MCF 10A (cell line): ENCODE measurements at regions of chr10 and their contacts with region 1.

Region 1: DNA sequence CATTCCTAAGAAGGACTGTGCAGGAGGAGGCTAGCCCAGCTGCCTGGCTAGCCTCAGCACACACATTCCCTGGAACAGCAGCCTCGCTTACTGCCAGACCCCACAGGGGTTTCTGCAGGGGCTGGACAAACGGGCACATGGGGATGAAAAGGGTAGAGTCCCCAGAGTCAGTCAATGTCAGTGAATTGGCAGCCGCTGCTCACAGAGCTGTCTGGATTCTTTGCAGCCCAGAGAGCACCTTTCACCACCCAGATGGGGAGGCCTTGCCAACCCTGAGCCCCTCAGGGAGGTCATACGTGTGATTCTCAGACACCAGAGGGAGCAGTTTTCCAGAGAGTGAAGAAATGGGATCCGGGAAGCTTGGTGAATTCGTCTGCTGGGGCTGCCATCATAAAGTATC is 143.3 kb downstream of the KCNMA1 start:
- DNase-seq: peak; percentile 49
- H3K4me3 Mint-ChIP-seq: no peak overlapping the region
- H3K27ac Mint-ChIP-seq: no peak overlapping the region
- H3K4me1 Mint-ChIP-seq: peaks cover 11% of the 10 kb centered on the region
- H3K27me3 Mint-ChIP-seq: no peaks in the 10 kb centered on the region
- CTCF ChIP-seq: no peak

Region 2: GRCh38 chr10:77605466-77605865 is 111.1 kb after region 1 on chr10:
- CTCF ChIA-PET with region 1: no interaction called
- POLR2A ChIA-PET with region 1: no interaction called
- intact Hi-C with region 1: loop called (anchors 1 kb)
- DNase-seq: peak; percentile 35
- H3K4me3 Mint-ChIP-seq: no peak overlapping the region
- H3K27ac Mint-ChIP-seq: no peak overlapping the region
- H3K4me1 Mint-ChIP-seq: peaks cover 28% of the 10 kb centered on the region
- H3K27me3 Mint-ChIP-seq: no peaks in the 10 kb centered on the region
- CTCF ChIP-seq: peak; percentile 27

Region 3: GRCh38 chr10:77675347-77675746 is 181.0 kb after region 1 on chr10:
- CTCF ChIA-PET with region 1: no interaction called
- POLR2A ChIA-PET with region 1: no interaction called
- intact Hi-C with region 1: no loop called
- DNase-seq: no peak
- H3K4me3 Mint-ChIP-seq: no peak overlapping the region
- H3K27ac Mint-ChIP-seq: no peak overlapping the region
- H3K4me1 Mint-ChIP-seq: peaks cover 5% of the 10 kb centered on the region
- H3K27me3 Mint-ChIP-seq: peaks cover 16% of the 10 kb centered on the region
- CTCF ChIP-seq: no peak